ENCODE measurements at regions of chr17 and their contacts with region 1.

Region 1: GRCh38 chr17:40203131-40203530 is 16.0 kb upstream of the WIPF2 start:
- DNase-seq: no peak
- H3K4me3 Mint-ChIP-seq: no peak overlapping the region
- H3K27ac Mint-ChIP-seq: no peak overlapping the region
- H3K4me1 Mint-ChIP-seq: peaks cover 5% of the 10 kb centered on the region
- H3K27me3 Mint-ChIP-seq: no peaks in the 10 kb centered on the region
- CTCF ChIP-seq: no peak

Region 2: GRCh38 chr17:40219073-40219860 is 16.1 kb after region 1 on chr17 and contains the start of gene WIPF2:
- CTCF ChIA-PET with region 1: interaction called, 29 read pairs
- POLR2A ChIA-PET with region 1: interaction called, 19 read pairs
- intact Hi-C with region 1: no loop called
- DNase-seq: peak; percentile 97
- H3K4me3 Mint-ChIP-seq: peak within 1 kb of the TSS; percentile 90
- H3K27ac Mint-ChIP-seq: peak within 1 kb of the TSS; percentile 98
- H3K4me1 Mint-ChIP-seq: peaks cover 16% of the 10 kb centered on the region
- H3K27me3 Mint-ChIP-seq: no peaks in the 10 kb centered on the region
- CTCF ChIP-seq: peak; percentile 68
- total RNA-seq, gene WIPF2: 31.9 and 32.8 TPM in 2 replicates

Region 3: GRCh38 chr17:40355123-40355803 is 152.1 kb after region 1 on chr17:
- CTCF ChIA-PET with region 1: interaction called, 8 read pairs
- POLR2A ChIA-PET with region 1: no interaction called
- intact Hi-C with region 1: loop called (anchors 2 kb)
- DNase-seq: peak; percentile 56
- H3K4me3 Mint-ChIP-seq: no peak overlapping the region
- H3K27ac Mint-ChIP-seq: no peak overlapping the region
- H3K4me1 Mint-ChIP-seq: peaks cover 7% of the 10 kb centered on the region
- H3K27me3 Mint-ChIP-seq: no peaks in the 10 kb centered on the region
- CTCF ChIP-seq: peak; percentile 94